ENCODE measurements at regions of chr11 and their contacts with region 1.

Region 1: GRCh38 chr11:72642884-72643511 is 31.2 kb downstream of the PDE2A start:
- DNase-seq: no peak
- H3K4me3 ChIP-seq: peak overlapping the region; percentile 57 to 59
- H3K27ac ChIP-seq: peak overlapping the region; percentile 31
- H3K4me1 ChIP-seq: peaks cover 16% of the 10 kb centered on the region
- H3K27me3 ChIP-seq: no peaks in the 10 kb centered on the region
- CTCF ChIP-seq: peak; percentile 75 to 97 (median 94)
- POLR2A ChIP-seq: no peak

Region 2: GRCh38 chr11:72413914-72414628 is 228.9 kb before region 1 on chr11:
- intact Hi-C with region 1: no loop called
- DNase-seq: no peak
- H3K4me3 ChIP-seq: no peak overlapping the region
- H3K27ac ChIP-seq: no peak overlapping the region
- H3K4me1 ChIP-seq: peaks cover 11% of the 10 kb centered on the region
- H3K27me3 ChIP-seq: no peaks in the 10 kb centered on the region
- CTCF ChIP-seq: peak; percentile 43 to 64 (median 61)
- POLR2A ChIP-seq: no peak

Region 3: DNA sequence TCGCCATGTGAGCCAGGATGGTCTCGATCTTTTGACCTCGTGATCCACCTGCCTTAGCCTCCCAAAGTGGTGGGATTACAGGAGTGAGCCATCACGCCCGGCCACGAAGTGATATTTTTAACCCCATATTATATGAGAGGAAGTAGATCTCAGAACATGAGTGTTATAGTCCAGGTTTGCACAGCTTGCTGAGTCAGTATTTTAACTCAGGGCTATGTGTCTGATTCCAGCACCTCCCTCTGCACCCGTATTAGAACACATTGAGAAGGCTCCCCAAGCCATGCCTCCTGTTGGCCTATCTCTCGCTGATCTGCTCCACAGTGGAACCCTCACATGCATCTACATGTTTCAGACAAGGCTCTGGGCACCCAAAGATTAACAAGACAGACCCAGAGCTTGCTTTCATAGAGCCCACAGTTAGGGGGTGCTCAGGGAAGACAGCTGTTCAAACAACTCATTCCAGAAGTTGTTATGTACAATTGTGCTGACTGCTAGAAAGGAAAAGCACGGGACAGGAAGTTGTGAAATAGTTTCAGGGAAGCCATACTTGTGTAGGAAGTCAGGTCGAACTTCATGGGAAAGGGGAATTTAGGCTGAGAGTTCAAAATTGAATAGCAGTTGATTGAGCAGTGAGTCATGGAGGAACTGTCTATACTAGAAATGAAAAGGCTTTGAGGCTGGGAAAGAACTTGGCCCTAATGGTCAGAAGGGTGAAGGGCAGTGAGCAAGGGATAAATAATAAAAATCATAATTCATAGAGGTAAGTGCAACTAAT is 159.4 kb before region 1 on chr11:
- intact Hi-C with region 1: loop called (anchors 5 kb)
- DNase-seq: no peak
- H3K4me3 ChIP-seq: no peak overlapping the region
- H3K27ac ChIP-seq: no peak overlapping the region
- H3K4me1 ChIP-seq: no peaks in the 10 kb centered on the region
- H3K27me3 ChIP-seq: no peaks in the 10 kb centered on the region
- CTCF ChIP-seq: no peak
- POLR2A ChIP-seq: no peak

Region 4: GRCh38 chr11:72519220-72519881 is 123.6 kb before region 1 on chr11:
- intact Hi-C with region 1: no loop called
- DNase-seq: no peak
- H3K4me3 ChIP-seq: peak overlapping the region; percentile 30
- H3K27ac ChIP-seq: no peak overlapping the region
- H3K4me1 ChIP-seq: peaks cover 6% of the 10 kb centered on the region
- H3K27me3 ChIP-seq: no peaks in the 10 kb centered on the region
- CTCF ChIP-seq: no peak
- POLR2A ChIP-seq: no peak

Region 5: DNA sequence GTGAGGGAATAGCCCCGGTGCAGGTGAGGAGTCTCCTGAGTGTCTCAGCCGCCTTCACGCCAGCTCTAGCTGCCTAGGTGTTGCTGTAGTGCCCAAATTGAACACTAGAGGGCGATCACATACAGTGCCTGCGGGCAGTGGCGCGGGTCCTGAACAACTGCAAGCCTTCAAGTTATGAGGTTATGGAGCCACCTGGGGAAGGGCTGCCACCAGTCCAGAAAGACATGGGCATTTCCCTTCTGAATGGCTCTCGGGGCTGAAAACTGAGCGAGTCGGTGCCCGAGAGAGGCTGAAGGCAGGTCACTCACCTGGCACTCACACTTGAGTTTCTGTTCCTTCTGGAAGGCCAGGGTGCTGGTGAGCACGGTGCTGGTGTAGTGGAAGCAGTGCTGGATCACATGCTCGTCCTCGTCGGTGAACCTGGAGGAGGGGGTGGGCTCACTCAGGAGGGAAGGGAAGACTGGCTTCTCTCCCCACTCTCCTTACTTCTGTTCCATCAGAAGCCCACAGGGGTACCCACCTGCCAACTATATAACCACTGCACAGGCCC is 57.2 kb before region 1 on chr11:
- intact Hi-C with region 1: loop called (anchors 2 kb)
- DNase-seq: no peak
- H3K4me3 ChIP-seq: no peak overlapping the region
- H3K27ac ChIP-seq: no peak overlapping the region
- H3K4me1 ChIP-seq: peaks cover 30% of the 10 kb centered on the region
- H3K27me3 ChIP-seq: no peaks in the 10 kb centered on the region
- CTCF ChIP-seq: peak; percentile 86 to 91 (median 87)
- POLR2A ChIP-seq: no peak

Region 6: DNA sequence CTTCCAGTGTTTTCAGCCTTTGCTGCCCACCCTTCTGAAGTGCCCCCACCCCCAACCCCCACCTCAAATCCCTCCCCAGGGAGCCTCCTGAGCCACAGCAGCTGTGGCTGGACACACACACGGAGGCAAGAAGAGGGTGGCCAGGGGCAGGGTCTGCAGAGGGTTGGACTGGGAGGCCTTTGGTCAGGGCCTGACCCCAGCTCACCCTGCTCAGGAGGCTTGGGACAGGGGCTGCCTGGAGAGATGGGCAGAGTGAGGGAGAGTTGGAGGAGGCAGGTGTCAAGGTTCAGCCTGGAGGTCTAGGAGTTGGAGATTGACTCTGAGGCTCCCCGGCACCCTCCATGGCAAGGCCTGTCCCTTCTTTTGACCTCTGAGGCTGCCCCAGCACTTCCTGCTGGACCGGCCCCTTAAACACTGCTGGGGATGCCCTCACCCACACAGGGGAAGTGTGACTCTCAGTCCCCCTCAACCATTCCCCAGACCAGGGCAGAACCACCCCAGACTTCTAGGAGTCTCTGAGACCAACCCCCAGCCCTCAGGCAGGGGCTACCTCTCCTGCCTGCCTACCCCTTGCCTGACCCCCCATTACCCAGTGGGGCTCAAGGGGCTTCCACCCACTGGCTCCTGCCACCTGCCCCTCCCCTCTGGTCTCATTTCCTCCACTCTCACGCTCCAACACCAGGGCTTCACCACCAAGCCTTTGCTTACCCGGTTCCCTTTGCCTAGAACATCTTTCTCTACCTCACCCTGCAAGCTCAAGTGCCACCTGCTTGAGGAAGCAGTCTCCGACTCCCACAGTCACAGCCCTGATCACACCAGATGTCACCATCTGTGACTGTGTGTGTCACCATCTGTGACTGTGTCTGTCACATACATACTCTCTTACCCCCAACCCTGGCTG is 100.6 kb after region 1 on chr11:
- intact Hi-C with region 1: no loop called
- DNase-seq: no peak
- H3K4me3 ChIP-seq: no peak overlapping the region
- H3K27ac ChIP-seq: no peak overlapping the region
- H3K4me1 ChIP-seq: peaks cover 34% of the 10 kb centered on the region
- H3K27me3 ChIP-seq: no peaks in the 10 kb centered on the region
- CTCF ChIP-seq: no peak
- POLR2A ChIP-seq: no peak